Caco-2 (cell line): ENCODE measurements at regions of chr7 and their contacts with region 1.

Region 1: GRCh38 chr7:83655951-83656556 is 7.1 kb upstream of the SEMA3E start:
- DNase-seq: peak in 1 of 2 experiments; percentile 51
- H3K4me3 ChIP-seq: no peak overlapping the region
- H3K4me3 Mint-ChIP-seq: no peak overlapping the region
- H3K27ac Mint-ChIP-seq: no peak overlapping the region
- H3K4me1 ChIP-seq: no peaks in the 10 kb centered on the region
- H3K4me1 Mint-ChIP-seq: no peaks in the 10 kb centered on the region
- H3K27me3 ChIP-seq: no peaks in the 10 kb centered on the region; the same call in 1 of the 2 replicates
- H3K27me3 Mint-ChIP-seq: peaks cover 12% of the 10 kb centered on the region
- CTCF ChIP-seq: peak; percentile 74 to 86

Region 2: DNA sequence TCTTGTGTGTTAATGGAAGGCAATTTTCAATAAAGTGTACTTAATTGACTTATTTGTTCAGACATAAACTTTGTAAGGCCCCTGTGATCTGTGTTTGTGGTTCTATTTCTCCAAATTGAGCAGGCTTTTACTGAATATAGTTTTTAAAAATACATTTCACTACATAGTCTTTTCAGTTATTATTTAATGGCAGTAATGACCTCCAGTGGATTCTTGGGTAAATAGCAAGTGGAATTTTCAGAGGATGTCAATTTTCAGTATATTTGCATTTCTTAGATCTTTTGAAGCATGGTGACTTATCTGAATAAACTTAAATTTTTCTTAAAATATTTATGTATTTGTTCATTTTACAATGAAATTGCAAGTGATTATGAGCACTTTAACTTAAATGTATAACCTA is 290.3 kb before region 1 on chr7:
- CTCF ChIA-PET with region 1: no interaction called
- POLR2A ChIA-PET with region 1: no interaction called
- intact Hi-C with region 1: loop called (anchors 1 kb)
- DNase-seq: no peak
- H3K4me3 ChIP-seq: no peak overlapping the region
- H3K4me3 Mint-ChIP-seq: no peak overlapping the region
- H3K27ac Mint-ChIP-seq: no peak overlapping the region
- H3K4me1 ChIP-seq: no peaks in the 10 kb centered on the region
- H3K4me1 Mint-ChIP-seq: no peaks in the 10 kb centered on the region
- H3K27me3 ChIP-seq: no peaks in the 10 kb centered on the region
- H3K27me3 Mint-ChIP-seq: peaks cover 2% of the 10 kb centered on the region
- CTCF ChIP-seq: no peak

Region 3: GRCh38 chr7:83410989-83411591 is 245.0 kb before region 1 on chr7:
- CTCF ChIA-PET with region 1: no interaction called
- POLR2A ChIA-PET with region 1: no interaction called
- intact Hi-C with region 1: loop called (anchors 1 kb)
- DNase-seq: peak in 1 of 2 experiments; percentile 15
- H3K4me3 ChIP-seq: no peak overlapping the region
- H3K4me3 Mint-ChIP-seq: no peak overlapping the region
- H3K27ac Mint-ChIP-seq: no peak overlapping the region
- H3K4me1 ChIP-seq: no peaks in the 10 kb centered on the region
- H3K4me1 Mint-ChIP-seq: no peaks in the 10 kb centered on the region
- H3K27me3 ChIP-seq: no peaks in the 10 kb centered on the region
- H3K27me3 Mint-ChIP-seq: no peaks in the 10 kb centered on the region
- CTCF ChIP-seq: peak; percentile 70 to 79

Region 4: DNA sequence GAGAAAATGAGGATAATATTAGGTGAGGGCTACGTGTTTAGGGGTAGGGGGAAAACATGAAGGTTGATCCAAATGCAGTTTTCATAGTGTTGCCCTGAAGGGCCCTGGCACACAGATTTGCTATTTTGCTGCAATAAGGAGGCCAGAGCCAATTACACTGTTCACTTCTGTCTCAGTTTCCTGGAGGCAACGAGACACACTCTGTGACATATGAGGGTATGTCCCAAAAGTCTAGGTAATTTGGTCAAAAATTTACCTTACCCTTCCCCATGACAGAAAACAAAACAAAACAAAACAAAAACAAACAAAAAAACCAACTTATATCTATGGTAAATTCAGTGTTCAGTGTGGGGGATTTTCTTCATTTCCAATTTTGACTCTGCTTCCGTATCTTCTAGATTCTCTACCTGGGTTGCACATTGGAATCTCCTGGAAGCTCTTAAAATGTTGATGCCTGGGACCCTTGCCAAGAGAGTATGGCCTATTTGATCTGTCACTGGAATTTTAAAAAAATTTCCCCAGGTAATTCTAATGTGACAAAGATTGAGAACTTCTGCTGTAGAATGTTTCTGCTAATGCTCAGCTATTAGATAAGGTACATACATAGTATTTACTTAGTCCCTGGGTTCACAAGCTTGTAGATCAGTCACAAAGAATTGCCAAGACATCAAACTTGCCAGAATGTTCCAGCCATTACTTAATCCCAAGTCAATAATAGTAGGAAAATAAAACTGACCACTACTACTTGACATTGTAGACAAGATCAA is 146.6 kb before region 1 on chr7:
- CTCF ChIA-PET with region 1: no interaction called
- POLR2A ChIA-PET with region 1: no interaction called
- intact Hi-C with region 1: loop called (anchors 1 kb)
- DNase-seq: no peak
- H3K4me3 ChIP-seq: no peak overlapping the region
- H3K4me3 Mint-ChIP-seq: no peak overlapping the region
- H3K27ac Mint-ChIP-seq: no peak overlapping the region
- H3K4me1 ChIP-seq: no peaks in the 10 kb centered on the region
- H3K4me1 Mint-ChIP-seq: no peaks in the 10 kb centered on the region
- H3K27me3 ChIP-seq: no peaks in the 10 kb centered on the region
- H3K27me3 Mint-ChIP-seq: peaks cover 2% of the 10 kb centered on the region
- CTCF ChIP-seq: no peak

Region 5: DNA sequence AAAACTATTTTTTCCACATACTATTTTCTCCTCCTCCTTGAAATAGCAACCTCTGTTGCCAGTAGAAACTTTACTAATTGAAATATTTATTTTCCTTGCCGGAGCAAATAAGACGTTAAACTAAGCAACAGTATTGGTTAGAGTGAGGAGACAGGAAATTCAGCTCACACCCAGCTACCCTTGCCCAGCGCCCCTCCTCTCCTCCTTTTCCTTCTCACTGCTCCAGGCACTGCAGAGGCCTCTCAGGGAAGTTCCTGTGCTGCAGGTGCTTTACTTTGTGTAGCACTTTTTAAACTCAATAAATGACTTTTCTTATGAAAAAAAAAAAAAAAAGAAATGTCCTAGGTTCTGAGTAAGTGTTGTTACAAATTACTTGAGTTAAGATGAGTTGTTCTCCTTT is 141.1 kb before region 1 on chr7:
- CTCF ChIA-PET with region 1: no interaction called
- POLR2A ChIA-PET with region 1: no interaction called
- intact Hi-C with region 1: loop called (anchors 1 kb)
- DNase-seq: no peak
- H3K4me3 ChIP-seq: no peak overlapping the region
- H3K4me3 Mint-ChIP-seq: no peak overlapping the region
- H3K27ac Mint-ChIP-seq: no peak overlapping the region
- H3K4me1 ChIP-seq: no peaks in the 10 kb centered on the region
- H3K4me1 Mint-ChIP-seq: no peaks in the 10 kb centered on the region
- H3K27me3 ChIP-seq: no peaks in the 10 kb centered on the region
- H3K27me3 Mint-ChIP-seq: peaks cover 2% of the 10 kb centered on the region
- CTCF ChIP-seq: no peak

Region 6: DNA sequence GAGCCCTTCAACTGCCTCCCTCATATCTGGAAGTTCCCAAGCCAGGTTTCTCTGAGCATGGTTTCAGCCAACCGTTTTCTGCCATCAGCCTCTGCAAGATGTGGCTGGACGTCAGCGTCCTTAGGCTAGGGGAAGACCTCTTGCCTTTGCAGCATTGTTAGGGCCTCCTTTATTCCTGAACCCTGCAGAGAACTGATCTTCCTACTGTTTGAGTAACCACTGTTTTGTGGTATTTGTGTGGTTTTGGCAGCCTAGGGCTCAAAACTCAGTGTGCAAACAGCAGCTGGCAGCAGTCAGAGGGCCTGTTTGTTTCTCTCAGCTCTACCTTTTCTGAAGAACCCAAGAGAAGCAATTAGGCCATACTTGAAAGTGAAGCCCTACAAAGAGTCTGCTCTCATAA is 76.3 kb after region 1 on chr7:
- CTCF ChIA-PET with region 1: no interaction called
- POLR2A ChIA-PET with region 1: no interaction called
- intact Hi-C with region 1: loop called (anchors 2 kb)
- DNase-seq: no peak
- H3K4me3 ChIP-seq: no peak overlapping the region
- H3K4me3 Mint-ChIP-seq: no peak overlapping the region
- H3K27ac Mint-ChIP-seq: no peak overlapping the region
- H3K4me1 ChIP-seq: no peaks in the 10 kb centered on the region
- H3K4me1 Mint-ChIP-seq: peaks cover 7% of the 10 kb centered on the region
- H3K27me3 ChIP-seq: no peaks in the 10 kb centered on the region
- H3K27me3 Mint-ChIP-seq: peaks cover 3% of the 10 kb centered on the region
- CTCF ChIP-seq: no peak

Region 7: DNA sequence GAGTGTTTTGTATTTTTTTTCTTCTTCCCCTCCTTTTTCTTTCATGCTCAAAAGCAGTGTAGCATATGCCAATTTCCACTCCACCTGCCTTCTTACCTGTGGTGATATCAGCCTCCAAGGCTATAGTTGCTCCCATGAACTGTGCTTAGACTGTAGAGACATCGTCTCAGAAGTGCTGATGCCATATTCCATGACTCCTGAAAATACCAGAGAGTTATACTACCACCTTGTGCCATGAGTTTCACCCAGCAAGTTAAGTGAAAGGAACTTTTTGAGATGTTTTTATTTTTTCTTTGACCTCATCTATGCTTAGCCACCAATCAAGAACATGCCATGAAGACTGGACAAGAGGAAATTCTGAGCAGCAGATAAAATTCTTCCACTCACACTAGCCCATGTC is 135.7 kb after region 1 on chr7:
- CTCF ChIA-PET with region 1: no interaction called
- POLR2A ChIA-PET with region 1: no interaction called
- intact Hi-C with region 1: loop called (anchors 5 kb)
- DNase-seq: no peak
- H3K4me3 ChIP-seq: no peak overlapping the region
- H3K4me3 Mint-ChIP-seq: no peak overlapping the region
- H3K27ac Mint-ChIP-seq: no peak overlapping the region
- H3K4me1 ChIP-seq: no peaks in the 10 kb centered on the region
- H3K4me1 Mint-ChIP-seq: no peaks in the 10 kb centered on the region
- H3K27me3 ChIP-seq: no peaks in the 10 kb centered on the region
- H3K27me3 Mint-ChIP-seq: peaks cover 2% of the 10 kb centered on the region
- CTCF ChIP-seq: no peak

Region 8: GRCh38 chr7:84058311-84059076 is 402.4 kb after region 1 on chr7:
- CTCF ChIA-PET with region 1: no interaction called
- POLR2A ChIA-PET with region 1: no interaction called
- intact Hi-C with region 1: no loop called
- DNase-seq: no peak
- H3K4me3 ChIP-seq: no peak overlapping the region
- H3K4me3 Mint-ChIP-seq: peak overlapping the region; percentile 13
- H3K27ac Mint-ChIP-seq: peak overlapping the region; percentile 76
- H3K4me1 ChIP-seq: peaks cover 53% of the 10 kb centered on the region
- H3K4me1 Mint-ChIP-seq: peaks cover 16% of the 10 kb centered on the region
- H3K27me3 ChIP-seq: no peaks in the 10 kb centered on the region
- H3K27me3 Mint-ChIP-seq: no peaks in the 10 kb centered on the region
- CTCF ChIP-seq: no peak